AG04449 (cell line): ENCODE measurements at regions of chr12 and their contacts with region 1.

Region 1: DNA sequence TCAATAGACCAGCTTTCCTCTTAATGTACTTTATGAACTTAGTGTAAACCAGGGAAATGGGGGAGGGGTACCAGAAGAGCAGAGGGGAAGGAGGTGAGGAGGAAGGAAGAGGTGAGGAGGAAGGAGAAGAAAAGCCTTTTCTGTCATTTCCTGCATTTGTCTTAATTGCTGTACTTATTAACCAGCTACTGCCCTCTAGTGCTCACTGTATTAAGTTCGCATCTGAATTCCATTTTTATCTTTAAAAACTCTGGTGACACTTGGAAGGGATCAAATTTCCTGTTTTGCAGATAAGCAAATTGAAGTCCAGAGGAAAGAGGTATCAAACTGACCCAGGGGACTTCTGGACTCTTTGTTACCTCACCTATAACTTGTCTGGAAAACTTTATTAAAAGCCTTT is 22.2 kb downstream of the MANSC1 start:
- DNase-seq: no peak
- H3K4me3 ChIP-seq: no peak overlapping the region
- CTCF ChIP-seq: peak; percentile 42

Region 2: DNA sequence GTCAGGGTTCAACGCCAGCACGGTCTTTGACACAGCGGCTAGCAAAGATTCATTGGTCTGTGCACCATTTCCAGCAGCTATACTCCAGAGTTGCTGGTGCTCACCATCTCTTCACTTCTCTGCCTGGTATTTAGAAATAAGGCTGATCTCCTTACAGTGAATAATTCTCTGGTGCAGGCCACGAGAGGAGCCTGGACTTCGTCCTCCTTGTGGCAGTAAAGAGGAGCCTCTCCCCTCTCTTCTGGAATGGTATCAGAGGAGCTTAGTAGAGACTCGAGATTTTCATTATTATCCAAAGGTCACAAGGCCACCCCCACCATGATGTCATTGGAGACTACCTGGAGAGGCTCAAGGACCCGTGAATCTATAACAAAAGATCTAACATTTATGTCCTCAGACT is 287.9 kb before region 1 on chr12:
- CTCF ChIA-PET with region 1: interaction called, 73 read pairs
- POLR2A ChIA-PET with region 1: no interaction called
- DNase-seq: no peak
- H3K4me3 ChIP-seq: no peak overlapping the region
- CTCF ChIP-seq: no peak

Region 3: DNA sequence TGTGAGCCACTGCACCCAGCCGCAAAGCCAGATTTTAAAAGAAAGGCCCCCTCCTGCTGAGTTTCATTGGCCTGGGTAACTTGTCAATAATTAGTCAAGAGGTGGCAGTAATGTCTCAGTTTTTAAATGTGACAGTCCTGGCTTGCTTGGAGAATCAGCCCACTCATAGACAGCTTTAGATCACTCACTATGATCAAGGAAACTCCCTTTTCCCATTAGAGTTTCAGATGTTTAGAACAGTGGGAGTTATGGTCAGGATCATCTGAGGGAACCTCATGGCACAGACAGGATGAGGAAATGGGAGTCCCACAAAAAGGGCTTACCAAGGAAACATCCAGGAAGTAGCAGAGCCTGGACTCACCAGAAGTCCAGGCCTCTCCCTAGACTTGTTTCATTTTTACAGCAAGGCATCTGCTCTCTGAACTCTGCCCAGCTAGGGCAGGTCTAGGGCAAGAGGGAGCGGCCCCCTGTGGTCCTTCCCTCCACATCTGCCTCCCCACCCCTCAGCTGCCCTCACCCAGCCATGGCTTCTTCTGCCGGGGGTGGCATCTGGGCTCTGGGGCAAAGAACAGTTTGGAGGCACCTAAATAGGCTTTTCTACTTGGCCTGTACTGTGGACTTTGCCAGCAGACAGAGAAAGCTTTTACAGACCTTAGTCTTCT is 245.8 kb before region 1 on chr12:
- CTCF ChIA-PET with region 1: interaction called, 110 read pairs
- POLR2A ChIA-PET with region 1: no interaction called
- DNase-seq: no peak
- H3K4me3 ChIP-seq: no peak overlapping the region
- CTCF ChIP-seq: no peak

Region 4: GRCh38 chr12:12086973-12087692 is 240.7 kb before region 1 on chr12:
- CTCF ChIA-PET with region 1: interaction called, 110 read pairs
- POLR2A ChIA-PET with region 1: no interaction called
- DNase-seq: no peak
- H3K4me3 ChIP-seq: no peak overlapping the region
- CTCF ChIP-seq: no peak

Region 5: DNA sequence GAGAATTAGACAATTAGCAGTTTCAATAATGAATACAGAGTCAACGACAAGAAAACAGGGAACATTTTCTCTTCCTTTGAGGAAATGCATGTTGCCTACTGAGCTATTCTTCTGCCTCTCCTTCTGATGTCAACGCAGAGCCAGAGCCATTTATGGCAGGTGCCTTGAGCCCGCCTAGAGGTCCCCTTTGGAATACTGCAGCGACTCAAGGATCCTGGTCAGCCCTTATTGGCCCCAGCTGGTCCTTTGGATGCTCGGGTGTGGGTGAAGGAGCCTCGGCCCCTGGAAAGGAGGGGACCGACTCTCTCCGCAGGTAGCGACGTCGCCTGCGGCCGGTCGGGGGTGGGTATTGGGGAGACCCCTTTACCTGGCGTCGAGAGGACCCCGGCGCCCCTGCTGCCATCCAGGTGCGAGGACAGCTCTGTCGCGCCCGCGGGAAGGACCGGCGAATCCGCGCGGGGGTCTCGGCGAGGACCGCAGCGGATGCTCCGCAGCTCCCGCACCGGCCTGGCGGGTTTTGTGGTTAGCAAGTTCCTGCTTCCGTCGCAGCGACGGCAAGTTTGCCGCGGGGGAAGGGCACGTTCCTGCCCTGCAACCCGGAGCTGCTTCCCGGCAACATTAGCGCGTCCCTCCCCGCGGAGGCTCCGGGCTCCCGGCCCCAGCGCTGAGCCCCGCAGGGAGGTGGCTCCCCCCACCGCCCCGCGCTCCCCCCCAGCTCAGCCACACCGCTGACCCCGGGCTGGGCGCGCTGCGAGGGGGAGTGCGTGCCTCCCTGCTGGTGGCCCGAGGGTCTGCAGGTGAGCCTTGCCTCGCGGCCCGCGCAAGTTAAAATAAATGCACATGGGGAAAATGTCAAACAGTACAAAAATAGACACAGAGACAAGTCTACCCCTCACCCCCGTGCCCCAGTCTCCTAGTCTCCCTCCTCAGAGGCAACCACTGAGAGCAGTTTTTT is 22.2 kb after region 1 on chr12 and contains the start of gene MANSC1:
- CTCF ChIA-PET with region 1: interaction called, 12 read pairs
- POLR2A ChIA-PET with region 1: no interaction called
- DNase-seq: no peak
- H3K4me3 ChIP-seq: peak within 1 kb of the TSS; percentile 63
- CTCF ChIP-seq: peak; percentile 41

Region 6: DNA sequence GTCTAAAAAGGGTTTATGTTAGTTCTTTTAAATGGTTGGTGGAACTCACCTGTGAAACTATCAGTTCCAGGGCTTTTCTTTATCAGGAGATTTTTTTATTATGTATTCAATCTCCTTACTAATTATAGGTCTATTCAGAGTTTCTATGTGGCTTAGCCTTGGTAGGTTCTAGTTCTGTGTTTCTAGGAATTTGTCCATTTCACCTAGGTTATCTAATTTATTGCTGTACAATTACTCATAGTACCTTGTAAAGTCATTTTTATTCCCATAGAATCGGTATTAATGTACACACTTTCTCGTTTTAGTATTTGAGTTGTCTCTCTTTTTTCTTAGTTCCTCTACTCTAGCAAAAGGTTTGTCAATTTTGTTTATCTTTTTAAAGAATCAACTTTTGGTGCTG is 88.1 kb after region 1 on chr12:
- CTCF ChIA-PET with region 1: no interaction called
- POLR2A ChIA-PET with region 1: no interaction called
- DNase-seq: no peak
- H3K4me3 ChIP-seq: no peak overlapping the region
- CTCF ChIP-seq: no peak